GM23248 (cell line): ENCODE measurements at regions of chr13 and their contacts with region 1.

Region 1: DNA sequence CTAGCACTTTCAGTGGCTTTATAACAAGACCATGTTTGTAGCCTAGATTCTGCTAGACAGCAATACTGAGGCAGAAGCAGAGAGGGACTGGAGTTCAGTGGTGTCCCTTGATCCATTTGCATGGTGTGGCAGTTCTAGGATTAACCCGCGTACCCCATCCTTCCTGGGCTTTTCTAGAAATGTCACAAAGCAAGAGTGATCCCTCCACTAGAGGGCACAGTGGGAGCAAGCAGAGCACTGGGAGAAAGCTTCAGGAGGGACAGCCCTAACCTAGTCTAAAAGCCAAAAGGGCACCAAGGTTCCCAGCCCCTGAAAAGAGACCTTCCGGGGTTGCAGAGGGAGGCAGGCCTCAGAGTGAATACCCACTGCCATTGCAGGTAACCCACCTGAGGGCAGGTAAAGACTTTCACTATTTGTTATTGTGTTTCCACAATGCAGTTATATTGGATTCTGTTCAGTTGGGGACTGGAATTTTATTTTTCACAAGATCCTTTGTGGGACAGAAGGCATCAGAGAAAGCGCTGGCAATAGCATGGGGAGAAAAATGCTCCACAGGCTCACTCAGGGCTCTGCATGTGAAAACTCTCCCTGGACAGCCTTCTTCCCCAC is 170.6 kb downstream of the FLT1 start:
- DNase-seq: peak; percentile 83
- H3K4me3 ChIP-seq: no peak overlapping the region
- H3K27ac ChIP-seq: no peak overlapping the region
- H3K4me1 ChIP-seq: peaks cover 47% of the 10 kb centered on the region
- H3K27me3 ChIP-seq: no peaks in the 10 kb centered on the region

Region 2: DNA sequence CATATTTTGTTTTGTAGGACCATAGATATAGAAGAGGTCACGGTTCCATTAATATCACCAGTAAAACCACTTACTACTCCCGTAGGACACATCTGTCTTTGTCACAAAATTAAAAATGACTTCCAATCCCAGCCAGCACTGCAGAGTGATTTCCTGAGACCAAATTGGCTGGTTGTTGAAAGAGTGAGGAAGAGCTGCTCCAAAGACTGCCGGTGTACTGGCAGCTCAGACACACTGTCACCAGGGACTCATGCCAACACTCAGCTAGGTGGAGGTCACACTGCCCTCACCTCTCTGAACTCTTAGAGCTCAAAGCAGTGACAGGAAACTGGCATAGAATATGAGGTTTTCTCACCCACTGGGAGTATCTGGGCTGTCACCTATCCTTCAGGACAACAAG is 118.6 kb after region 1 on chr13:
- in situ Hi-C with region 1: no loop called
- DNase-seq: no peak
- H3K4me3 ChIP-seq: no peak overlapping the region
- H3K27ac ChIP-seq: no peak overlapping the region
- H3K4me1 ChIP-seq: no peaks in the 10 kb centered on the region
- H3K27me3 ChIP-seq: no peaks in the 10 kb centered on the region

Region 3: DNA sequence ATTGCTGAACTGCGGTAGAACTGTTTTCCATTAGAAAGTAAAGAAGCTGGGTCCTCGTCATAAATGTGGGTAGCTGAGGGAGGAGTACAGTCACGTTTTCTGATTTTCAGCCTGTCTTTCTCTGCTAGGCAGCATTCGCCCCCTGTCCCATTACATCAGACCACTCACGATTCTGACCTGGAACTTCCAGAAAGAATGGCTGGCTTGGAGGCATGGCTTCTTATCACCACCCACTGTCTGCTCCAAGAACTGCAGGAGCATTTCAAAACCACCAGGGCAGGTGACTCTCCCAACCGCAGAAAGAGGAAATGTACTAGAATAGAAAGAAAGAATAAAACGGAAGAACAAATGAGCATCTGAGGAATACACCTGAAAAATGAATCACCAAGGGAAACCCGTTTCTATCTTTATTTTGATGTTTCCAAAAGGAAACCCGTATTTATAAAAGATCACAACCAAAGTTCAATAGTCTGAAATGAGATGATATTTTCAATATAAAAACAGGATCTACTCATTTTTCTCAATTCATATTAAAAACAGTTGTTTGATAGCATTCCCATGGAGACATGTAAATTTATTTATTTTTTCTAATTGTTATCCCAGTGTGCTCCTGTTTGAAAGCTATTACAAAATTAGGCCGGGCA is 312.5 kb after region 1 on chr13:
- in situ Hi-C with region 1: loop called (anchors 5 kb)
- DNase-seq: peak; percentile 86
- H3K4me3 ChIP-seq: peak overlapping the region; percentile 35; the same call in 1 of the 2 replicates
- H3K27ac ChIP-seq: peak overlapping the region; percentile 24
- H3K4me1 ChIP-seq: peaks cover 16% of the 10 kb centered on the region
- H3K27me3 ChIP-seq: no peaks in the 10 kb centered on the region

Region 4: GRCh38 chr13:28792992-28793391 is 468.7 kb after region 1 on chr13:
- in situ Hi-C with region 1: loop called (anchors 10 kb)
- DNase-seq: peak; percentile 94
- H3K4me3 ChIP-seq: no peak overlapping the region
- H3K27ac ChIP-seq: no peak overlapping the region
- H3K4me1 ChIP-seq: peaks cover 8% of the 10 kb centered on the region
- H3K27me3 ChIP-seq: peaks cover 14% of the 10 kb centered on the region